Naive thymus-derived CD4-positive, alpha-beta T cell (primary cell): ENCODE measurements at regions of chr14 and their contacts with region 1.

Region 1: GRCh38 chr14:94001501-94002396 is 4.6 kb downstream of the CCDC197 start:
- DNase-seq: peak; percentile 28 to 63 (median 51)
- ATAC-seq: peak; percentile 85
- H3K4me3 ChIP-seq: no peak overlapping the region
- H3K4me3 Mint-ChIP-seq: peak overlapping the region in 9 of 10 donors; percentile 23 to 57 (median 53)
- H3K27ac ChIP-seq: no peak overlapping the region
- H3K27ac Mint-ChIP-seq: peak overlapping the region in 2 of 9 donors; percentile 38 to 78
- H3K4me1 ChIP-seq: peaks cover 4 to 6% of the 10 kb centered on the region in 2 donors
- H3K4me1 Mint-ChIP-seq: peaks cover 2 to 45% (median 10%) of the 10 kb centered on the region in 7 donors
- H3K27me3 ChIP-seq: no peaks in the 10 kb centered on the region
- H3K27me3 Mint-ChIP-seq: peaks cover 6 to 19% (median 8%) of the 10 kb centered on the region in 5 donors

Region 2: DNA sequence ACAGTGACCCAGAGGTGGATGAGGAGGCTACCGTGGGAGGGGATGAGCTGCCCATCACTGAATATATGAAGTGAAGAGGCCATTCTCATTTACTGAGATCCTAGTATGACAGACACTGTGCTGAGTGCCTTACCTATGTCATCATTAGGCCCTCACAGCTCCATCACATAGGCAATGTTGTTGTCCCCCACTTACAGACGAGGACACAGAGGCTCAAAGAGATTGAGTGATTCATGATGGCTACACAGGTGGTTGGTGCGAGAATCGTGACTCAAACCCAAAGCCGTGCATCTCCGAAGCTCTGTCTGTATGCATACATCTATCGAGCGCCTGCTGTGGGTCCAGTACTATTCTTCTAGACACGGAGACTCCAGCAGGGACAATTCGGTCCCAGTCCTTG is 10.5 kb before region 1 on chr14:
- CTCF ChIA-PET with region 1: interaction called, 10 read pairs
- POLR2A ChIA-PET with region 1: no interaction called
- intact Hi-C with region 1: no loop called
- DNase-seq: no peak
- ATAC-seq: no peak
- H3K4me3 ChIP-seq: no peak overlapping the region
- H3K4me3 Mint-ChIP-seq: no peak overlapping the region
- H3K27ac ChIP-seq: no peak overlapping the region
- H3K27ac Mint-ChIP-seq: no peak overlapping the region
- H3K4me1 ChIP-seq: no peaks in the 10 kb centered on the region
- H3K4me1 Mint-ChIP-seq: peaks cover 0 to 33% (median 2%) of the 10 kb centered on the region in 7 donors
- H3K27me3 ChIP-seq: no peaks in the 10 kb centered on the region
- H3K27me3 Mint-ChIP-seq: no peaks in the 10 kb centered on the region